Esophagus squamous epithelium (tissue), 5 donors: ENCODE measurements at regions of chr9 and their contacts with region 1.

Region 1: GRCh38 chr9:75866273-75866871 is 24.1 kb upstream of the PCSK5 start:
- DNase-seq: no peak
- H3K4me3 ChIP-seq: no peak overlapping the region
- H3K27ac ChIP-seq: no peak overlapping the region
- H3K4me1 ChIP-seq: no peaks in the 10 kb centered on the region
- H3K27me3 ChIP-seq: peaks cover 0 to 6% (median 0%) of the 10 kb centered on the region in 4 donors
- CTCF ChIP-seq: peak; percentile 33 to 78 (median 64)
- POLR2A ChIP-seq: no peak

Region 2: GRCh38 chr9:75265525-75265972 is 600.8 kb before region 1 on chr9:
- intact Hi-C with region 1: loop called (anchors 10 kb)
- DNase-seq: no peak
- H3K4me3 ChIP-seq: no peak overlapping the region
- H3K27ac ChIP-seq: no peak overlapping the region
- H3K4me1 ChIP-seq: no peaks in the 10 kb centered on the region
- H3K27me3 ChIP-seq: no peaks in the 10 kb centered on the region
- CTCF ChIP-seq: peak; percentile 62 to 90 (median 73)
- POLR2A ChIP-seq: no peak

Region 3: GRCh38 chr9:76302947-76303940 is 436.9 kb after region 1 on chr9:
- intact Hi-C with region 1: loop called (anchors 10 kb)
- DNase-seq: no peak
- H3K4me3 ChIP-seq: no peak overlapping the region
- H3K27ac ChIP-seq: no peak overlapping the region
- H3K4me1 ChIP-seq: peaks cover 0 to 3% (median 0%) of the 10 kb centered on the region in 3 donors
- H3K27me3 ChIP-seq: peaks cover 0 to 6% (median 0%) of the 10 kb centered on the region in 4 donors
- CTCF ChIP-seq: peak; percentile 58 to 82 (median 68)
- POLR2A ChIP-seq: no peak